ENCODE measurements at regions of chr5 and their contacts with region 1.

Region 1: DNA sequence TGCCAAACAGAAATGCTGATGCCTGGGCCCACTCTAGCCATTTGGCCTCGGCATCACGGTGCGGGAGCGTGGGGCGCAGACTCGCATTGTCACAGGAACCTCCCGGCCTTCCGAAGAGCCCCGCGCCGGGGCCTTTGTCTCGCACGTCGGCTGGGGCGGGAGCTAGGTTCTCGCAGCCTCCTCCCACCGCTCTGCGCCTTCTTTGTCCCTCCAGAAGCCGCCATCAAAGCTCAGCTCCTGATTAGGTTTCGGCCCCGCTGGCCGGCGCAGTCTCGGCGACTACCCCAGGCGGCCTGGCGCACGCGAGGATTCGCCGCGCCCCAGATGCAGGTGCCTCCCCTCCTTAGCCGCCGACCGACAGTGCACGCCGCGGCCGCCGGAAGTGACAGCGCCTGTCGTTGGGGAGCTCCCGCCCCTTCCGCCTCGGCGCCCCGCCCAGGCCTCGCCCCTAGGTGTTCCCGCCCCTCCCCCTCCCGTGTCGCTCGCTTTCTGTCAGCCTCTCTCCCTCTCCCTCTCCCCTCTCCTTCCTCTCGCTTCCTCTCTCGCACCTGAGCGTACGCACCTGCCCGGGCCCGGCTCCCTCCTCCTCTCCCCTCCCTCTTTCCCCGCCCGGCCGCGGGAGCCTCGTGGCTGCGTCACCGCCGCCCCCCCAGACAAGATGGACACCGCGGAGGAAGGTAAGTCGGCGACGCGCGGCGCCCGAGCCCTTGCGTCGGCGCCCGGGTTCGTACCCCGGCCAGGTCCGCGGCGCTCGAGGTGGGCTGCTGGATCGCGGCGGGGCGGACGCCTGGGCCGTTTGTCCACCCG is at the start of gene MARCHF6:
- DNase-seq: peak; percentile 99
- ATAC-seq: peak; percentile 83
- H3K4me3 ChIP-seq: peak within 1 kb of the TSS; percentile 92
- H3K27ac ChIP-seq: peak within 1 kb of the TSS; percentile 84
- H3K4me1 ChIP-seq: peaks cover 26% of the 10 kb centered on the region
- H3K27me3 ChIP-seq: no peaks in the 10 kb centered on the region
- CTCF ChIP-seq: no peak
- total RNA-seq, gene MARCHF6: 140 TPM in 2 replicates

Region 2: DNA sequence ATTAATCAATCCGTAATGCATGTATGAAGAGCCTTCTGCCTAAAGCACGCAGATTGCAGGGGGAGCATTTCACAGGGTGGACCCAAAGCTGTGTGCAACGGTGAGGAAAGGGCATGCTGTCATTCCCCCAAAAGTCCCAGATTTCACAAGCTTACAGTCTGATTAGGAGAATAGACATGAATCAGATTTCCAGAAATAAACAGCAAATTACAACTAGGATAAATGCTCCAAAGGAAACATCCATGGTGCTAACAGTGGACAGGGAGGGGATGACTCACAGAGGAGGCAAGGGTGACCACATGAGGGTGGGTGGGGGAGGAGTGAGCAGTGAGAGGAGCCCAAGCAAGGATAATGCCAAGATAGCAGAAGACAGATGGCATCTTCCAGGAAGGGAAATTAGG is 464.9 kb before region 1 on chr5:
- CTCF ChIA-PET with region 1: no interaction called
- POLR2A ChIA-PET with region 1: no interaction called
- intact Hi-C with region 1: no loop called
- DNase-seq: peak; percentile 81
- ATAC-seq: peak; percentile 45; the same call in 1 of the 2 replicates
- H3K4me3 ChIP-seq: no peak overlapping the region
- H3K27ac ChIP-seq: 0 out of 2 replicates have a peak overlapping the region, but pooled peaks have one; percentile 2
- H3K4me1 ChIP-seq: peaks cover 11% of the 10 kb centered on the region
- H3K27me3 ChIP-seq: no peaks in the 10 kb centered on the region
- CTCF ChIP-seq: no peak

Region 3: GRCh38 chr5:10249948-10250803 is 103.3 kb before region 1 on chr5 and contains the start of gene CCT5:
- CTCF ChIA-PET with region 1: no interaction called
- POLR2A ChIA-PET with region 1: no interaction called
- intact Hi-C with region 1: loop called (anchors 1 kb)
- DNase-seq: peak; percentile 99
- ATAC-seq: peak; percentile 64
- H3K4me3 ChIP-seq: peak within 1 kb of the TSS; percentile 91
- H3K27ac ChIP-seq: peak within 1 kb of the TSS; percentile 82
- H3K4me1 ChIP-seq: peaks cover 31% of the 10 kb centered on the region
- H3K27me3 ChIP-seq: no peaks in the 10 kb centered on the region
- CTCF ChIP-seq: no peak
- total RNA-seq, gene CCT5: 1,309 and 1,334 TPM in 2 replicates

Region 4: DNA sequence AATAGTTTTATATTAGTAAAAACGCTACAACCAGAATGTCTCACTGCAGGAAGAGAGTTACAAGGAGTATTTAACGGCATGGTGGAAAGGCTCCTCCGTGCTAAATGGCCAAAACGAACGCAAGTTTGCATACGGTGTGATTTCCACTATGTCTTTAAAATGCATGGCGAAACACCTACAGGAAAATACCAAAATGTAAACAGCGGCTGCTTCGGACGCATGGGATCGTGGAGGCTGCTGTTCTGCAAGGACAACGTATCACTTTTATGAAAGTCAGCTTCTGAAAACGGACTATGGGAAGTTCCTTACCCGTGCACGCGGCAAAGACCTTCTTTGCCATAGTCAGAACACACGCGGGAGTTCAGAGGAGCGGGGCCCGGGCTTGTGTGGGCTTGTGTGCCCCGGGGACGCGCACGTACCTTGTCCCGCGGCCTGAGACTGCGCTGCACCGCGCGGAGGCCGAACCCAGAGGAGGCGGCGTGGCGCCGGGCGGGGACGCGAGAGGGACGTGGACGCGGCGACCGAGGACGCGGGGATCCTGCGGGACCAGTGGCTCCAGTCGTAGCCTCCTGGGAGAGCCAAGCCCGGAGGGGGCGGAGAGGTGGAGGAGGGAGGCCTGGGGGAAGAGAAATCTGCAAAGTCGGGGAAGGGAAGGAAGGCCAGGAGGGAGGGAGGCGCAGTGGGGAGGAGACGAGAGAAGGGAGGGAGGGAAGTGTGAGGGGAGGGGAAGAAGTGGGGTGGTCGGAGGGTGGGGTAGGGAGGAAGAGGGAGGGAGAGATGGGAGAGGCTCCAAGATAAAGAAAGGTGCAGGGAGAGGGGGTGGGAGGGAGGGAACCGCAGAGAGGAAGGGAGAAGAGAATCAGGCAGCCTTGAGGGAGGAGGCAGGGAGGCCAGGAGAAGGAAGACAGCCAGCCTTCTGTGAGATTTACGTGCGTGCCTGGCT is 46.0 kb before region 1 on chr5 and contains the start of gene CMBL:
- CTCF ChIA-PET with region 1: interaction called, 3 read pairs
- POLR2A ChIA-PET with region 1: interaction called, 3 read pairs
- intact Hi-C with region 1: loop called (anchors 1 kb)
- DNase-seq: peak; percentile 92
- ATAC-seq: peak; percentile 61
- H3K4me3 ChIP-seq: peak within 1 kb of the TSS; percentile 76
- H3K27ac ChIP-seq: peak within 1 kb of the TSS; percentile 88
- H3K4me1 ChIP-seq: peaks cover 42% of the 10 kb centered on the region
- H3K27me3 ChIP-seq: no peaks in the 10 kb centered on the region
- CTCF ChIP-seq: no peak
- total RNA-seq, gene CMBL: 35.7 and 38.4 TPM in 2 replicates

Measured in PC-3 (cell line).